Ovary (tissue), 10 donors: ENCODE measurements at regions of chr3 and their contacts with region 1.

Region 1: GRCh38 chr3:164673738-164674137 is 404.6 kb downstream of the SI start:
- DNase-seq: no peak
- H3K4me3 ChIP-seq: no peak overlapping the region
- H3K27ac ChIP-seq: no peak overlapping the region
- H3K4me1 ChIP-seq: no peaks in the 10 kb centered on the region
- H3K27me3 ChIP-seq: no peaks in the 10 kb centered on the region
- CTCF ChIP-seq: no peak
- EP300 ChIP-seq: no peak
- POLR2A ChIP-seq: no peak

Region 2: GRCh38 chr3:164852866-164853265 is 179.1 kb after region 1 on chr3:
- intact Hi-C with region 1: loop called in 1 of 4 experiments (anchors 10 kb)
- DNase-seq: no peak
- H3K4me3 ChIP-seq: no peak overlapping the region
- H3K27ac ChIP-seq: no peak overlapping the region
- H3K4me1 ChIP-seq: no peaks in the 10 kb centered on the region
- H3K27me3 ChIP-seq: no peaks in the 10 kb centered on the region
- CTCF ChIP-seq: no peak
- EP300 ChIP-seq: no peak
- POLR2A ChIP-seq: no peak